ENCODE measurements at regions of chr6 and their contacts with region 1.

Region 1: GRCh38 chr6:108835218-108835850 is 12.9 kb upstream of the ARMC2 start:
- DNase-seq: peak; percentile 79 to 85
- H3K4me3 ChIP-seq: no peak overlapping the region
- H3K4me3 Mint-ChIP-seq: no peak overlapping the region
- H3K27ac Mint-ChIP-seq: no peak overlapping the region
- H3K4me1 ChIP-seq: no peaks in the 10 kb centered on the region
- H3K4me1 Mint-ChIP-seq: no peaks in the 10 kb centered on the region
- H3K27me3 ChIP-seq: no peaks in the 10 kb centered on the region
- H3K27me3 Mint-ChIP-seq: no peaks in the 10 kb centered on the region
- CTCF ChIP-seq: peak; percentile 87 to 89

Region 2: DNA sequence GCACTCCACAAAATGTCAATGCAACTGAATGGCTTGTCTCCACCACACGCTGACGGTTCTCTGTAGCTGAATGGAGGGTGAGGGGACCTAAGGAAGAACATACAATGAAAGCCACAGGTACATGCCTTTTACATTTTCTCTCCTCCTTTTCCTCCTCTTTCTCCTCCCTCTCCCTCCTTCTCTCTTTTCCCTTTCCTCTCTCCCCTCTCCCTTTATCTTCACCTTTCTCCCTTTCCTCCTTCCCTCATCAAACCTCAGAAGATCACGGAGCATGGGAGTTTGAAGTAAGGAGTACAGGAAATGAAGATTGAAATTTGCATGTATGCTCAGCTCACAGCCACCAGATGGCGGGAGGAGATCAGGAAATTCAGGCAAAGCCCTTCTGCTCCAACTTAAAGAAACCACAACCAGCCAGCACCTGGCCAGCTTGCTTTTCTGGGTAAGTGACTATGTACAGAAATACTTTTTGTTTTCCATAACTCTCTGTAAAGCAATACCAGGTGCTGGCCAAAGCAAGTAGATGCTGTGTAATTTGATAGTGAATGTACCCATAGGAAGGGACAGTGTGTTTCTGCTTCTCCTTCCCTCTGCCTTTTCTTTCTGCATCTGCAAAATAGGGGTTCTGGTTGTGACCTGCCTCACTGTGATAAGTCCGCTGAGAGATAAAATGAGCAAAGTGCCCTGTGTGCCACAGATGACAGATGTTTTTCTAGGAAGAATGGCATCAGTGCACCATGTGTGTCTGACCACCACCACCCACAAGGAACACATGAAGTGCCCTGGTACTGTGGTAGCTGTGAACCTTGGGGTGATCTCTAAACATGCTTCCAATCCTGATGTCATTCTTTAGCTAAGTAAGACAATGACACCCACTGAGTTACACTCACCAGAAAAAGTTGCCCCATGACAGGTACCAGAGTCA is 293.2 kb before region 1 on chr6:
- CTCF ChIA-PET with region 1: interaction called, 22 read pairs
- POLR2A ChIA-PET with region 1: no interaction called
- intact Hi-C with region 1: loop called (anchors 1 kb)
- DNase-seq: peak; percentile 67 to 74
- H3K4me3 ChIP-seq: peak overlapping the region; percentile 1; the same call in 1 of the 2 replicates
- H3K4me3 Mint-ChIP-seq: peak overlapping the region; percentile 55
- H3K27ac Mint-ChIP-seq: no peak overlapping the region
- H3K4me1 ChIP-seq: no peaks in the 10 kb centered on the region
- H3K4me1 Mint-ChIP-seq: no peaks in the 10 kb centered on the region
- H3K27me3 ChIP-seq: no peaks in the 10 kb centered on the region
- H3K27me3 Mint-ChIP-seq: no peaks in the 10 kb centered on the region
- CTCF ChIP-seq: peak; percentile 76 to 85

Region 3: DNA sequence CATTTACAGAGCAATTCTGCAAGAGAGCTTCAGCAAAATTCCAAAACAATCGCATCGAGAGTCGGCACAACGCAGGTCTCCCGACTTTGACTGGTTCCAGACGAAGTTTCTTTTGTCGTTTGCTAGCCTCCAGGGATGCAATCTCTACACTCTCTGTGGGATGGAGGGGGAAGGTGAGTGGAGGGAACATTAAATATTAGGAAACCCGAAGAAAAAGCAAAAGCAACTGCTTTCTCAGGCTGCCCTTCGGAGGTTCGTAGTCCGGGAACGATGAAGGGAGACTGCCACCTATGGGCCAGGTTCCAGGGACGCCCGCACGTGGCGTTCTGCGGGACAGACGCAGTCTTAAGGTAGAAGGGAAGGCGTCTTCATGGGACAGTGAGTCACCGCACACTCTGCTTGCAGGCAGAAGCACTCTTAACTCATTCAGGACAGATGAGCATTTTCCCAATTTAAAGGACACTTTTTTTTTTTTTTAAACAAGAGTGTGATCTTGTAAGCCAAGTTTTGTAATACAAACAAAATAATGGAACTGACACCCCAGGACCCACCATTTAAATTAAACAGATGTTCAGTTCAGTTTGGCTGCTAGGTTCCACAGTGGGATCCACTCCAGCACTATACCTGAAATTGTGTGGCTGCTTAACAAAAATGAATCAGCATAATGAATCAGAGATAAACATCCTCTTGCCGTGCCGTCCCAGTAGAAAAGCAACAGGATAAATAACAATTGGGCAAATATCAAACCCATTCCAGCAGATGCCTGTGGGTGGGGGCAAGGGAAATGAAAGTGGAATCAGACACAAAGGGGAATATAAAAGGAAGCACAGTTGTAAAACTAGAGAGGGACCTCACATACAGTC is 52.9 kb before region 1 on chr6:
- CTCF ChIA-PET with region 1: no interaction called
- POLR2A ChIA-PET with region 1: no interaction called
- intact Hi-C with region 1: loop called (anchors 1 kb)
- DNase-seq: peak; percentile 84 to 86
- H3K4me3 ChIP-seq: peak overlapping the region; percentile 30
- H3K4me3 Mint-ChIP-seq: peak overlapping the region; percentile 69
- H3K27ac Mint-ChIP-seq: no peak overlapping the region
- H3K4me1 ChIP-seq: 0 out of 2 replicates have a peak, but pooled peaks cover 7% of the 10 kb centered on the region
- H3K4me1 Mint-ChIP-seq: peaks cover 21% of the 10 kb centered on the region
- H3K27me3 ChIP-seq: no peaks in the 10 kb centered on the region
- H3K27me3 Mint-ChIP-seq: no peaks in the 10 kb centered on the region
- CTCF ChIP-seq: peak; percentile 72 to 92

Region 4: GRCh38 chr6:108798670-108799353 is 36.5 kb before region 1 on chr6:
- CTCF ChIA-PET with region 1: interaction called, 3 read pairs
- POLR2A ChIA-PET with region 1: no interaction called
- intact Hi-C with region 1: loop called (anchors 5 kb)
- DNase-seq: no peak
- H3K4me3 ChIP-seq: no peak overlapping the region
- H3K4me3 Mint-ChIP-seq: peak overlapping the region; percentile 28
- H3K27ac Mint-ChIP-seq: peak overlapping the region; percentile 43
- H3K4me1 ChIP-seq: peaks cover 36% of the 10 kb centered on the region
- H3K4me1 Mint-ChIP-seq: peaks cover 23% of the 10 kb centered on the region
- H3K27me3 ChIP-seq: no peaks in the 10 kb centered on the region
- H3K27me3 Mint-ChIP-seq: no peaks in the 10 kb centered on the region
- CTCF ChIP-seq: no peak

Region 5: DNA sequence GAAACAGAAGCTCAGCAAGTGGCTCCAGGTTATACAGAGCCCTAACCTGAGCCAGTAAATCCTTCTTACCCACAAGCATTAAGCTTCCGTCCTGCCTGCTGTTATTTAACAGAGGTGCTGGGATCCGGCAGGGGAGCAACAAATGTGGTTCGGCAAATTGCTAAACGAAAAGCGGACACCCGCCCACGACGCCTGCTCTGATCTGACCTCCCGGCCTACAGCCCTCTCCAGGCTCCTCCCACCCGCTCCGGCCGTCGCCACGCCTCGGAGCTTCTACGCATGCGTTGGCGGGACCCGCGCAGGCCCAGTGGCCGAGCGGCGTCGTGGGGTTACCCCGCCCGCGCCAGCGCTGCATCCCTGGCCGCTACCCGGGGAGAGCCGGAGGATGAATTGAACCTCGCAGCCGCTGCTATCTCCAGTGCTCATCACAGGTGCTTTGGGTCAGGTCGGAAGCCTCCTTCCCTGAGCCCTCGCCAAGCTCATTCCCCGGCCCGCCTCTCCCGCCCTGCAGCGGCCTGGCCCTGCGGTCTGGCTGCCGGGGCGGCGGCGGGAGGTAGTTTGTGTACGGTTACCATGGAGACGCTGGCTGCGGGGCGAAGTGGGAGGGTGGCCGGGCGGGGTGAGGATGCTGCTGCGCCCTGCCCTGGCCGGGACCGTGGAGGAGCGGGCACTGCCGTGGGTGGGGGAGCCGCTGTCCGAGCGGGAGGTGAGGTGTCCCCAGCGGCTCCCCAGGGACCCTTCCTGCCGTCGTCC is 13.0 kb after region 1 on chr6 and contains the start of gene ARMC2:
- CTCF ChIA-PET with region 1: interaction called, 11 read pairs
- POLR2A ChIA-PET with region 1: no interaction called
- intact Hi-C with region 1: no loop called
- DNase-seq: peak; percentile 89 to 96
- H3K4me3 ChIP-seq: peak within 1 kb of the TSS; percentile 63
- H3K4me3 Mint-ChIP-seq: peak within 1 kb of the TSS; percentile 80
- H3K27ac Mint-ChIP-seq: peak within 1 kb of the TSS; percentile 85
- H3K4me1 ChIP-seq: no peaks in the 10 kb centered on the region
- H3K4me1 Mint-ChIP-seq: peaks cover 6% of the 10 kb centered on the region
- H3K27me3 ChIP-seq: no peaks in the 10 kb centered on the region
- H3K27me3 Mint-ChIP-seq: no peaks in the 10 kb centered on the region
- CTCF ChIP-seq: no peak
- total RNA-seq, gene ARMC2: 6.1 and 7.8 TPM in 2 replicates

Region 6: GRCh38 chr6:108896111-108896661 is 60.9 kb after region 1 on chr6:
- CTCF ChIA-PET with region 1: interaction called, 7 read pairs
- POLR2A ChIA-PET with region 1: no interaction called
- intact Hi-C with region 1: loop called (anchors 2 kb)
- DNase-seq: no peak
- H3K4me3 ChIP-seq: no peak overlapping the region
- H3K4me3 Mint-ChIP-seq: no peak overlapping the region
- H3K27ac Mint-ChIP-seq: no peak overlapping the region
- H3K4me1 ChIP-seq: peaks cover 10% of the 10 kb centered on the region
- H3K4me1 Mint-ChIP-seq: peaks cover 15% of the 10 kb centered on the region
- H3K27me3 ChIP-seq: no peaks in the 10 kb centered on the region
- H3K27me3 Mint-ChIP-seq: no peaks in the 10 kb centered on the region
- CTCF ChIP-seq: no peak

Region 7: GRCh38 chr6:108914235-108915022 is 79.1 kb after region 1 on chr6:
- CTCF ChIA-PET with region 1: no interaction called
- POLR2A ChIA-PET with region 1: no interaction called
- intact Hi-C with region 1: no loop called
- DNase-seq: peak in 1 of 2 experiments; percentile 68
- H3K4me3 ChIP-seq: no peak overlapping the region
- H3K4me3 Mint-ChIP-seq: no peak overlapping the region
- H3K27ac Mint-ChIP-seq: no peak overlapping the region
- H3K4me1 ChIP-seq: no peaks in the 10 kb centered on the region
- H3K4me1 Mint-ChIP-seq: peaks cover 7% of the 10 kb centered on the region
- H3K27me3 ChIP-seq: no peaks in the 10 kb centered on the region
- H3K27me3 Mint-ChIP-seq: no peaks in the 10 kb centered on the region
- CTCF ChIP-seq: peak; percentile 54 to 68

Region 8: DNA sequence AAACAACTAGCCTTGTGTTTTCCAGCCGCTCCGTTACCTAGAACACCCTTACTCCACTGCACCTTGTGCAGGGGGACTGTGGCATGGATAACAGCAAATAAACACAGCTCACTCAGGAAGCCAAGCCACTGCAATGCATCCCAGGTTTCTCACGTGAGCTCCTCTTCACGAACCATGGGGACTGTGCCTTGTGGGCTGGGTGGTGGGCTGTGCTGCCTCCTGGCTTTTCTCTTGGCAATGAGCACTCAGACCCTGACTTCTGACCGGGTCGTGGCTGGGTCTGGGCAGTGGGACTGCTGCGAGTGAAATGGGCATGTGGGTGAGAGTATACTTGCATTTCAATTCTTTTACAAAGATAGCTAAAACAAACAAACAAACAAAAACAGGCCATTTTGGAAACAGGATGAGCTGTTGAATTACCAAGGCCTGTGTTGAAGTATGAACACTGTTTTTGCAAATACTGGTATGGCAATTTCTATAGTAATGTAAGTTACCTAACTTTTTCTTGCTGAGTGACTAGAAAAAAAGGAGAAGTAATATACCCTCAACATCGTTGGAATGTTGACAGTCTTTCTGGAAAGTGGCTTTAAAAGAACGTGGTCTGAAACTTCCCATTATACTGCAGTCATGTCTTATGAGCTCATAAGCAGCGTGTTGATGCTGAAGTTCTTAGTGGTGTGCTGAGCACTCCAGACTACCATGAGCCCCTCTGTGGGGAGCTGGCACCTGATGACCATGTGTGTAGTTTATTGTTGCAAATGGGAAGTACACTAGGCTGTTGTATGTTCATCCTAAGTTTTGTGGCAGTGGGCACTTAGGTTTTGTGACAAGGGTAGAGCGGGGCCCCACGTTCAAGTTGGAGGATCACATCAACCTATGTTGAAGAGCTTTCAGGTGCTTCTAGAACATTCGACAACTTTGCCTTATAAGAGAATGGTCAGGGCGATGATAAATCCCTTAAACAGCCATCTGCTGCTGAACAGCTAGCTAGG is 133.3 kb after region 1 on chr6:
- CTCF ChIA-PET with region 1: no interaction called
- POLR2A ChIA-PET with region 1: no interaction called
- intact Hi-C with region 1: no loop called
- DNase-seq: no peak
- H3K4me3 ChIP-seq: no peak overlapping the region
- H3K4me3 Mint-ChIP-seq: no peak overlapping the region
- H3K27ac Mint-ChIP-seq: no peak overlapping the region
- H3K4me1 ChIP-seq: peaks cover 25% of the 10 kb centered on the region
- H3K4me1 Mint-ChIP-seq: peaks cover 7% of the 10 kb centered on the region
- H3K27me3 ChIP-seq: no peaks in the 10 kb centered on the region
- H3K27me3 Mint-ChIP-seq: no peaks in the 10 kb centered on the region
- CTCF ChIP-seq: no peak

Region 9: DNA sequence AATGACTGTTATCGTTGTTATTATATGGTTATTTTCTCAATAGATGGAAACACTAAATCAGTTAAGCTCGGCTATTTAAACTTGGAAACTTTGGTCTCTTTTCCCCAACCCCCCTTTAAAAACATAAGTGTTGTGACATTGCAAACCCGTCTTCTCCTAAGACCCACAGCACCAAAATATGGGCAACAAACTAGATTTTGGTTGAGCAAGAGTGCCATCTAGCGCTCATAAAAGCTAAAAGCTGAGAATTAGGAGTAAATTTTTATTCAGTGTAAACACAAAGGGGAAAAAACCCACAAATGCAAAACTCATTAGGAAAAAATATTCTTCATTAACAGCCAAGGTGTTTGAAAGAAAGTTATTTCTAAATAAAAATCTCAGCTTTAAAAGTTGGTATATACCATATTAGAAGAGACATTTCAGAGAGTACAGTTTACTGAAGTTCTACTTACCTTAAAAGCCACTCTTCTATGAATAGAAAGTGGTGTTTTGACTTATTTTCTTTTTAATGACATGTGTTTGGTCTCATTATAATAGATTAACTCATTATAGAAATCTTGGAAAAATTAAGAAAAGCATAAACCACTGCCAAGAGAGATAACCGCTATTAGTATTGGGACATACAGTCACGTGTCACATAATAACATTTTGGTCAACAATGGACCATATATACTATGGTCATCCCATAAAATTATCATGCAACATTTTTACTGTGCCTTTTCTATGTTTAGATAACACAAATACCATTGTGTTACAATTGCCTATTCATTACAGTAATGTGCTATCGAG is 238.2 kb after region 1 on chr6:
- CTCF ChIA-PET with region 1: no interaction called
- POLR2A ChIA-PET with region 1: no interaction called
- intact Hi-C with region 1: loop called (anchors 1 kb)
- DNase-seq: peak in 1 of 2 experiments; percentile 71
- H3K4me3 ChIP-seq: no peak overlapping the region
- H3K4me3 Mint-ChIP-seq: no peak overlapping the region
- H3K27ac Mint-ChIP-seq: no peak overlapping the region
- H3K4me1 ChIP-seq: peaks cover 16% of the 10 kb centered on the region; the same call in 1 of the 2 replicates
- H3K4me1 Mint-ChIP-seq: peaks cover 21% of the 10 kb centered on the region
- H3K27me3 ChIP-seq: no peaks in the 10 kb centered on the region
- H3K27me3 Mint-ChIP-seq: no peaks in the 10 kb centered on the region
- CTCF ChIP-seq: peak; percentile 47 to 59

Measured in Caco-2 (cell line).